WTC11 (cell line): ENCODE measurements at regions of chr5 and their contacts with region 1.

Region 1: GRCh38 chr5:59188419-59189225 is 605.7 kb downstream of the RAB3C start:
- DNase-seq: peak; percentile 63
- ATAC-seq: peak; percentile 78
- H3K4me3 Mint-ChIP-seq: peak overlapping the region; percentile 32
- H3K27ac Mint-ChIP-seq: no peak overlapping the region
- H3K4me1 Mint-ChIP-seq: peaks cover 19% of the 10 kb centered on the region
- H3K27me3 Mint-ChIP-seq: no peaks in the 10 kb centered on the region
- CTCF ChIP-seq: peak; percentile 74

Region 2: DNA sequence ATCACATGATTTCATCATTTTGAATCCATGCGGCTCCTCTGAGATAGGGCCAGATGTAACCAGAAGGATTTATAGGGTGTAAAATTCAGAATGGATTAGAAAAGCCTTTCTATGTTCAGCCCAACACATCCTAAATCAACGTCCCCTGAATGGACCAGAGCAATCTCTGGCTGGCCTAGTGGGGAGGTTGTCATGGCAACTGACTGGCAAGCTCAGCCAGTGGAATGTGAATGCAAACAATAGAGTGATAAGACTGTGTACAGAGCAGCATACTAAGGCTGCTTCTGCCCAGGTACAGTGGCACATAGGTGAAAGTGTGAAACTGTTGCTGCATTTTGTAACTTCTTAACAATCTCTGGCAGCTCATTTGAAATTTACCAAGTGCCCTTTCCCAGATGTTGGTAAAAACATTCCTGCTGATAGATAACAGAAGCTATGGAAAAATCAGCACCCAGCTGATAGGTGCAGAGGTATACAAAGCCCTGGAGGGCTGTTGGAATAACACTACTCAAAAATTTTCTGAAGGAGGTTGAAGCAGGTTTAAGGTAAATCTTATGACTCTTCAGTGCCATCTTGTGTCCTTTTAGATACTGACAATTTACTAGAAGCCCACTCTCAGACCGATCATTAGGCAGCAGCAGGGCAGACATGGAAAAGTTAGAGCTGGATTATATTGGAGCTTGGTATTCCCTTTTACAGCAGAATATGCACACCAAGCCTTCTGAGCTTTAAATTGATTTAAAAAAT is 338.5 kb before region 1 on chr5:
- CTCF ChIA-PET with region 1: no interaction called
- POLR2A ChIA-PET with region 1: no interaction called
- DNase-seq: peak; percentile 17
- ATAC-seq: peak; percentile 93
- H3K4me3 Mint-ChIP-seq: no peak overlapping the region
- H3K27ac Mint-ChIP-seq: no peak overlapping the region; the same call in 1 of the 2 replicates
- H3K4me1 Mint-ChIP-seq: peaks cover 5% of the 10 kb centered on the region
- H3K27me3 Mint-ChIP-seq: no peaks in the 10 kb centered on the region
- CTCF ChIP-seq: peak; percentile 27; the same call in 1 of the 2 replicates

Region 3: DNA sequence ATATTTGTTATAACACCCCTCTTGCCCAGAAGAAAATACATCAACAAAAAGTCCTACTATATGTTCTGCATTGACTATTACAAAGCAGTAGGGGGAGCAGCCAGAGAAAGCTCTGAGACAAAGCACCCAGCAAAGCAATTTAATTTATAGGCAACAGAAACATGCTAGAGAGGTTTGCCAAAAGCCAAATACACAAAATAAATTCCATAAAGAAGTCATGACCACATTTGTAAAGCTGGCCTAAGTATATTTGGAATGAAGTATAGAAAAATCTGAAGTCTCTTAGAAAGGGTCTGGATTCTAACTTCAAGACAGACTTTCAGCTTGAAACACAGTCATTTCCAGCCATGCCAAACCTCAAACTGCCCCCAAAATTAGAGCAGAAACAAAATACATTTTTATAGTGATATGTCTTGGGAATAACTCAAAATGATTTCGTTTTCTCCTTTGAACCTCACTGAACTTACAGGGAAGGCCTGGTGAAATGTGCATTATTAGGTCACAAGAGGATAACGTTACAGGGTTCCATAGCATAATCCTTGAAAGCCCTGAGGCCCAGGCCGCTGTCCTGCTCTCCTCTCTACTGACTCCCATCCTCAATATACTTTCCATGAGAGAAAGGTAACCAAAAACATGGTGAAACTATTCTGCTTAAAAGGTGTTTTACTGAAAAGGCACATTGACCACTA is 154.0 kb before region 1 on chr5:
- CTCF ChIA-PET with region 1: interaction called, 11 read pairs
- POLR2A ChIA-PET with region 1: no interaction called
- DNase-seq: no peak
- ATAC-seq: peak; percentile 59
- H3K4me3 Mint-ChIP-seq: no peak overlapping the region
- H3K27ac Mint-ChIP-seq: no peak overlapping the region
- H3K4me1 Mint-ChIP-seq: peaks cover 12% of the 10 kb centered on the region; the same call in 1 of the 2 replicates
- H3K27me3 Mint-ChIP-seq: peaks cover 27% of the 10 kb centered on the region
- CTCF ChIP-seq: peak; percentile 25; the same call in 1 of the 2 replicates

Region 4: GRCh38 chr5:59152701-59153245 is 35.8 kb before region 1 on chr5:
- CTCF ChIA-PET with region 1: no interaction called
- POLR2A ChIA-PET with region 1: no interaction called
- DNase-seq: no peak
- ATAC-seq: no peak
- H3K4me3 Mint-ChIP-seq: no peak overlapping the region
- H3K27ac Mint-ChIP-seq: no peak overlapping the region
- H3K4me1 Mint-ChIP-seq: peaks cover 16% of the 10 kb centered on the region
- H3K27me3 Mint-ChIP-seq: peaks cover 11% of the 10 kb centered on the region
- CTCF ChIP-seq: no peak

Region 5: DNA sequence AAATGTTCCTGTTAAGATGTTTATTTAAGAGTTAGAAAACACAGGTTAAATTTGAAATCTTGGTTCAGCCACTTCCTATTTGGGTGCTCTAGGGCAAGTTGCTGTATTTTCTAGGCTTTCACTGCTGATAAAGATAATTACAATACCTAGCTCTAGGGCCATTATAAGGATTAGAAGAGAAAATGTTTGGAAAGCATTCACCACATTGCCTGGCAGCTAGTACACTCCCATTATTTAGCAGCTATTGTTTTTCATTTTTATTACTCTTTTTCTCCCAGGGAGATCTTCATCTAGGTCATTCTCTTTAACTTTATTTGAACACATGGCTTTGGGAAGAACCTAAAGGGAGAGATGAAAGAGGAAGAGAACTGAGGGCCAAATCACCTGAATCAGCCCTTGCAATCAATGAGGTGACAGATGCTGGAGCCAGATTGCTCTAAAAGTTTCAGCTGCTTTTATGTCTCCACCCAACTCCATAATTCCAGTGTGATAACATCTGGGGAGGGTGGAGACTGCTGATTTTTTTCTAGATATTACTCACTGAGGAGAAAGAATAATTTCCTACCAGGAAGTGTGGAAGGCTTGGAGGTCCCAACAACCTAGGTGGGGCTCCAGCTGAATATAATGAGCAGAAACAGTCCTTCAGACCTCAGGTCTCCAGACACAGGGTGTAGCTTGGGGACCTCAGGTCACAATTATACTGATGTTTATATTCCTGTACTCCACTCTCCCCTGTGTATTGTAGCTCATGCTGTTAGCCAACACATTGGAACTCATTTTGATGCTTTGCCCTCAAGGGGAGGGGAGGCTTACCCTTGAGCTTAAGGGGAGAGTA is 34.3 kb after region 1 on chr5:
- CTCF ChIA-PET with region 1: interaction called, 10 read pairs
- POLR2A ChIA-PET with region 1: no interaction called
- DNase-seq: no peak
- ATAC-seq: no peak
- H3K4me3 Mint-ChIP-seq: no peak overlapping the region
- H3K27ac Mint-ChIP-seq: no peak overlapping the region
- H3K4me1 Mint-ChIP-seq: peaks cover 2% of the 10 kb centered on the region; the same call in 1 of the 2 replicates
- H3K27me3 Mint-ChIP-seq: no peaks in the 10 kb centered on the region
- CTCF ChIP-seq: no peak

Region 6: GRCh38 chr5:59358005-59358861 is 169.6 kb after region 1 on chr5:
- CTCF ChIA-PET with region 1: interaction called, 55 read pairs
- POLR2A ChIA-PET with region 1: no interaction called
- DNase-seq: peak; percentile 14
- ATAC-seq: peak; percentile 63
- H3K4me3 Mint-ChIP-seq: no peak overlapping the region
- H3K27ac Mint-ChIP-seq: no peak overlapping the region
- H3K4me1 Mint-ChIP-seq: peaks cover 43% of the 10 kb centered on the region
- H3K27me3 Mint-ChIP-seq: no peaks in the 10 kb centered on the region
- CTCF ChIP-seq: no peak

Region 7: GRCh38 chr5:59380350-59380951 is 191.8 kb after region 1 on chr5:
- CTCF ChIA-PET with region 1: interaction called, 36 read pairs
- POLR2A ChIA-PET with region 1: no interaction called
- DNase-seq: no peak
- ATAC-seq: no peak
- H3K4me3 Mint-ChIP-seq: no peak overlapping the region
- H3K27ac Mint-ChIP-seq: no peak overlapping the region
- H3K4me1 Mint-ChIP-seq: no peaks in the 10 kb centered on the region
- H3K27me3 Mint-ChIP-seq: no peaks in the 10 kb centered on the region
- CTCF ChIP-seq: no peak

Region 8: DNA sequence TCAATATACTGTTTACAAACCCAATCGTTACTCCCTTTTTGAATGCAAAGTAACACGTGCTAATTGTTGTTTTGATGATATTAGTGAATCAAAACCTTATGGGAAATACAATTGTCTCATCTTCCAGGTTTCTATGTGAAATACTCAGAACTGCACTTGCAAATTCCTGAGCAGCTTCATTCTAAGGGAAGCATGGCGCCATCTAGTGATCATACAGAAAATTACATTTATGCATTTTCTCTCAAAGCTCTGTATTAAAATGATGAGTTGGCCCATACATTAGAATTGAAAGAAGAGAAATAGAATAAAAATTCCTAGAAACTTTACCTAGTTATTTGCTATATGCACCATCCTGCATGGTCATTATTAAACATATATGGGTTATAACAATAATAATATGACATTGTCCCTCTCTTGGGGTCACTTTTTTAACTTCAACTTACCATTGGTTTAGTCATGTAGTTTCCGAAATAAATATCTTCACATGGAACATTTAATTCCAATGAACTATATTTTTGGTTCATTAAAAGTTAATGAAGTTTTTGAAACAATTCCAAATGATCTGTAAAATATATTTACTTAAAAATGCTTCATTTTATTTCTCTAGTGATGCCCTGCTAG is 484.9 kb after region 1 on chr5:
- CTCF ChIA-PET with region 1: interaction called, 11 read pairs
- POLR2A ChIA-PET with region 1: no interaction called
- DNase-seq: no peak
- ATAC-seq: 0 out of 2 replicates have a peak, but pooled peaks have one; percentile 36
- H3K4me3 Mint-ChIP-seq: no peak overlapping the region
- H3K27ac Mint-ChIP-seq: peak overlapping the region; percentile 55; the same call in 1 of the 2 replicates
- H3K4me1 Mint-ChIP-seq: peaks cover 6% of the 10 kb centered on the region
- H3K27me3 Mint-ChIP-seq: no peaks in the 10 kb centered on the region
- CTCF ChIP-seq: peak; percentile 81